ENCODE measurements at regions of chr6 and their contacts with region 1.

Region 1: GRCh38 chr6:41591859-41592502 is 45.8 kb downstream of the FOXP4 start:
- DNase-seq: peak; percentile 51 to 76
- ATAC-seq: peak; percentile 74

Region 2: DNA sequence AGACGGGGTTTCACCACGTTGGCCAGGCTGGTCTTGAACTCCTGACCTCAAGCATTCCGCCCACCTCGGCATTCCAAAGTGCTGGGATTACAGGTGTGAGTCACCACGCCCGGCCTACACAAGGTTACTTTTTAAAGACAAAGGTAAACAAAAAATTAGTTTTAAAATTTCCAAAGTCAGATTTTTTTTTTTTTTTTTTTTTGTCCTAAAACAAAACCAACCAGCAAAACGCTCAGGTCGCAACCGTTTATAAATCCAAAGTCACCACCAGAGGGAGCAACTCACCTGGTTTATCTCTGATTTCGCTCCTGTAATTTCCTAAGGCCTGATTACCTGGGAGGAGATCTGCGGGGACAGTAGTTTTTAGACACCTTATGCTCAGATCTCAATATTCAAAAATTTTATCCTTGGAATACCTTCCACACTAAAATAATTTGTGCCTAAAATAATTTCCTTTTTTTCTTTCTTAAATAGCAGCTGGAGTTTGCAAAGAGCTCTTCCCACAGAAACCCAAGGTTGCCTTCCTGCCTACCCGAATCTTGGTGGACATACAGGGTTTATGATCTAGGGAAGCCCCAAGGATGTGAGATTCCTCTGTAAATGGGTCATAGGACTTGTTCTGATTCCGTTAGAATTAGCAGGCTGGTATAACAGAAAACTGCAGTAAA is 285.7 kb before region 1 on chr6:
- intact Hi-C with region 1: no loop called
- DNase-seq: peak in 1 of 2 donors; percentile 42
- ATAC-seq: peak; percentile 68

Region 3: GRCh38 chr6:41367700-41368099 is 224.3 kb before region 1 on chr6:
- intact Hi-C with region 1: loop called in 1 of 2 experiments (anchors 5 kb)
- DNase-seq: peak in 1 of 2 donors; percentile 56
- ATAC-seq: peak; percentile 76

Region 4: GRCh38 chr6:41424370-41425058 is 167.5 kb before region 1 on chr6:
- intact Hi-C with region 1: loop called in 1 of 2 experiments (anchors 5 kb)
- DNase-seq: peak; percentile 66 to 92
- ATAC-seq: peak; percentile 51

Region 5: GRCh38 chr6:41463062-41463930 is 128.7 kb before region 1 on chr6:
- intact Hi-C with region 1: loop called in 1 of 2 experiments (anchors 10 kb)
- DNase-seq: peak in 1 of 2 donors; percentile 75
- ATAC-seq: peak; percentile 86

Region 6: GRCh38 chr6:41488433-41489119 is 103.4 kb before region 1 on chr6:
- intact Hi-C with region 1: no loop called
- DNase-seq: peak in 1 of 2 donors; percentile 11
- ATAC-seq: no peak